ENCODE measurements at regions of chr1 and their contacts with region 1.

Region 1: DNA sequence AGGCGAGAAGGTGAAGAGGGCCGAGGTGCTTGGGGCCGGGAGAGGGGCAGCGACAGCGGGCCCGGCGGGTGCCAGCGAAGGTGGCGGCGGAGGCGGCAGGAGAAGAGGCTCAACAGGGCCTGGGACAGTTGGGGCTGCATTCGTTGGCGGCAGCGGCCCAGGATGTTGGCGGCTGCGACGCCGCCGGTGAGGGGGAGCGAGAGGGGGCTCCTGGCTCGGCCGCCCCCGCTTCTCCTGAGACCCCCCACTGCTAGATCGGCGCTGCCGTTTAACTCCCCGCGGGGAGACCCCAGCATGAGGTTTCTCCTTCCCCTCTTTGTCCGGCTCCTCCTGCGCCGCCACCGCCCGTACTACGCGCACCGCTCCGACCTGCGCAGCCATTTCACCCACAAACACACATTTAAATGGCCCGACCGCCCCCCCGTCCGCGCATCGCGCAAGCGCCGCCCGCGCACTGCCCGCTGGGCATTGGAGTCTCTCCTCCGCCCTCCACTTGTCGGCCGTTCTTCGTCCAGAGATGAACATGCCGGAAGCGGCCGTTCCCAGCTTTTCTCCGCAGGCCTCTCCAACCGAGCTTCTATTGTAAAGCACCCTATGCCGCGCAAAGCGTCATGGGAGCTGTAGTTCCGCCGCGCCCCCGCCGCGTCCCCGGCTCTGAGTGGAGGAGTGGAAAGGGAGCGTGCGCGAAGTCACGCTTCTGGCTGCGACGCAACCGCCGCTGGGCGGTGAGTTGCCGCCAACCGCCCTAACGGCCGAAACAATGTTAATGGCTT is at the start of gene RSBN1:
- DNase-seq: peak; percentile 92 to 99 (median 98)
- ATAC-seq: peak; percentile 95
- H3K4me3 ChIP-seq: peak within 1 kb of the TSS; percentile 88
- H3K4me3 Mint-ChIP-seq: peak within 1 kb of the TSS; percentile 91 to 99 (median 97)
- H3K27ac ChIP-seq: peak within 1 kb of the TSS; percentile 97
- H3K27ac Mint-ChIP-seq: peak within 1 kb of the TSS; percentile 96 to 99 (median 98)
- H3K4me1 ChIP-seq: peaks cover 17 to 25% of the 10 kb centered on the region in 2 donors
- H3K4me1 Mint-ChIP-seq: peaks cover 20 to 51% (median 38%) of the 10 kb centered on the region in 7 donors
- H3K27me3 ChIP-seq: no peaks in the 10 kb centered on the region
- H3K27me3 Mint-ChIP-seq: no peaks in the 10 kb centered on the region
- total RNA-seq, gene RSBN1: 29.9 to 58.1 (median 42.0) TPM

Region 2: DNA sequence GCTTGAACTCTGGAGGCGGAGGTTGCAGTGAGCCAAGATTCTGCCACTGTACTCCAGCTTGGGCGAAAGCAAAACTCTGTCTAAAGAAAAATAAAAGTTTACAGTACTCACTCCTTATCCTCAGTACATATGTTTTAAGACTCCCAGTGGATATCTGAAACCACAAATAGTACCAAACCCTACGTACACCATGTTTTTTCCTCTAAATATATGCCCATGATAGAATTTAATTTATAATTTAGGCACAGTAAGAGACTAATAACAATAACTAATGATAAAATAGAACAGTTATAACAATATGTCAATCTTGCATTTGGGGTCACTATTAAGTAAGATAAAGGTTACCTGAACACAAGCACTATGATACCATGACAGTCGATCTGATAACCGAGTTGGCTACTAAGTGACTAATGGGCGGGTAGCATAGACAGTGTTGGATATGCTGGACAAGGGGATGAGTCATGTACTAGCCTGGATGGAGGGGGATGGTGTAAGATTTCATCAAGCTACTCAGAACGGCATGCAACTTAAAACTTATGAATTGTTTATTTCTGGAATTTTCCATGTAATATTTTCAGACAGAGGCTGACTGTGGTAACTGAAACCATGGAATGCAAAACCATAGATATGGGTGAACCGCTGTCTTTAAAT is 1236.8 kb before region 1 on chr1:
- CTCF ChIA-PET with region 1: no interaction called
- POLR2A ChIA-PET with region 1: no interaction called
- intact Hi-C with region 1: no loop called
- DNase-seq: no peak
- ATAC-seq: no peak
- H3K4me3 ChIP-seq: no peak overlapping the region
- H3K4me3 Mint-ChIP-seq: no peak overlapping the region
- H3K27ac ChIP-seq: no peak overlapping the region
- H3K27ac Mint-ChIP-seq: no peak overlapping the region
- H3K4me1 ChIP-seq: no peaks in the 10 kb centered on the region
- H3K4me1 Mint-ChIP-seq: no peaks in the 10 kb centered on the region
- H3K27me3 ChIP-seq: no peaks in the 10 kb centered on the region
- H3K27me3 Mint-ChIP-seq: no peaks in the 10 kb centered on the region

Region 3: GRCh38 chr1:112619520-112620376 is 1192.3 kb before region 1 on chr1 and contains the start of gene CAPZA1:
- CTCF ChIA-PET with region 1: no interaction called
- POLR2A ChIA-PET with region 1: interaction called, 9 read pairs
- intact Hi-C with region 1: loop called (anchors 1 to 5 kb)
- DNase-seq: peak; percentile 83 to 93 (median 91)
- ATAC-seq: peak; percentile 89
- H3K4me3 ChIP-seq: peak within 1 kb of the TSS; percentile 93
- H3K4me3 Mint-ChIP-seq: peak within 1 kb of the TSS; percentile 98 to 100 (median 99)
- H3K27ac ChIP-seq: peak within 1 kb of the TSS; percentile 100
- H3K27ac Mint-ChIP-seq: peak within 1 kb of the TSS; percentile 99 to 100 (median 100)
- H3K4me1 ChIP-seq: peaks cover 19 to 21% of the 10 kb centered on the region in 2 donors
- H3K4me1 Mint-ChIP-seq: peaks cover 27 to 55% (median 46%) of the 10 kb centered on the region in 7 donors
- H3K27me3 ChIP-seq: no peaks in the 10 kb centered on the region
- H3K27me3 Mint-ChIP-seq: peaks cover 0 to 1% (median 0%) of the 10 kb centered on the region in 5 donors
- total RNA-seq, gene CAPZA1: 114 to 237 (median 143) TPM

Region 4: DNA sequence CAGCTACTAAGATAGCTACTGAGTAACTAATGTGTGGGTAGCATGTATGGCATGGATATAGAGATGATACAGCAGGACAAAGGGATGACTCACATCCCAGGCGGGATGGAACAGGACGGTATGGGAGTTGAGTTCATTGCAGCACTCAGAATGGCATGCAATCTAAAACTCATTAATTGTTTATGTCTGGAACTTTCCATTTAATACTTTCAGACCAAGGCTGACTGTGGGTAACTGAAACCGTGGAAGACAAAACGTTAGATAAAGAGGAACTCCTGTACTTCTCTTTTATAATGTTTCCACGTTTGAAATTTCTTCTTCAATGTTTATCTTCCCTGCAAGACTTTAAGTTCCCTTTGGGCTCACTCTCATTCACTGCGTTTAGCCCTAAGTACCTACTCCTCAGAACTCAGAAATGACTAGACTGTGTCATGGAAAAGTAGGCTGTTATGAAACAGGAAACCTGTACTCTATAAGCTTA is 269.8 kb before region 1 on chr1:
- CTCF ChIA-PET with region 1: no interaction called
- POLR2A ChIA-PET with region 1: no interaction called
- intact Hi-C with region 1: no loop called
- DNase-seq: no peak
- ATAC-seq: no peak
- H3K4me3 ChIP-seq: no peak overlapping the region
- H3K4me3 Mint-ChIP-seq: no peak overlapping the region
- H3K27ac ChIP-seq: no peak overlapping the region
- H3K27ac Mint-ChIP-seq: no peak overlapping the region
- H3K4me1 ChIP-seq: no peaks in the 10 kb centered on the region
- H3K4me1 Mint-ChIP-seq: peaks cover 0 to 9% (median 0%) of the 10 kb centered on the region in 7 donors
- H3K27me3 ChIP-seq: no peaks in the 10 kb centered on the region
- H3K27me3 Mint-ChIP-seq: no peaks in the 10 kb centered on the region

Region 5: DNA sequence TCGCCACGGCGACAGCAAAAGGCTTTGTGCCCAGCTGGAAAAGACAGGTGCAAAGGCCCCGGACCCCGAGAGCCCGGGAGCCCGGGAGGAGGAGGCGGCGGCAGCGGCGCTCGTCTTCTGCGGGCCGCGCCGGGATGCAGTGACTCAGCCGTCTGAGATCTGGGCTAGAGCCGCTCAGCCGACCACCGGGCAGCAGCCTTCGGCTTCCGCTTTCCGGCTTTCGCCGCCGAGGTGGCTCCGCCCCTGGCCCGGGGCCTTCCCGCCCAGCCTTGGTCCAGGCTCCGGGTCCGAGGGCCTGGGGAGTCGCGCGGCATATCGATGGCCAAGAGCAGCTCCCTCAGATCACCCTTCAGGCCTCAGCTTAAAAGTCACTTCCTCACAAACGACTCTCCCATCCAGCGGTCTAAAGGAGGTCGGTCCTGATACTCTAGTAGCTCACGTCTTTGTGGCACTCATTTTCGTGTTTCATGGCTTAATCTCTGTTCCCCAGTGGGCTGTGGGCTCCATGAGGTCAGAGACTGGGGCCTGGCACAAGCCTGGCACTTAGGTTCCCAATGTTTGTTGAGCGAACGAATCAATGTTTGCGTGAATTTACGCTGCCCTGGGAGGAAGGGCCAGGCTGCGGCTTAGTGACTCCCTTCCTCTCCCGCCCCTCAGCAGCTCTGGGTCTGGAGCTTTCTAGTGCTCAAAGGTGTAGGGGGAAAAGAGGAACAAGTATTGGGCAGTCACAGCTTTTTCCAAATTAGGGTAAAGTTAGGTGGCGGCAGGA is 52.6 kb before region 1 on chr1 and contains the start of gene PHTF1:
- CTCF ChIA-PET with region 1: interaction called, 3 read pairs
- POLR2A ChIA-PET with region 1: interaction called, 31 read pairs
- intact Hi-C with region 1: loop called (anchors 1 kb)
- DNase-seq: peak in 8 of 9 donors; percentile 14 to 74 (median 23)
- ATAC-seq: peak; percentile 88
- H3K4me3 ChIP-seq: peak within 1 kb of the TSS; percentile 81
- H3K4me3 Mint-ChIP-seq: peak within 1 kb of the TSS; percentile 91 to 97 (median 93)
- H3K27ac ChIP-seq: peak within 1 kb of the TSS; percentile 74
- H3K27ac Mint-ChIP-seq: peak within 1 kb of the TSS; percentile 87 to 96 (median 90)
- H3K4me1 ChIP-seq: peaks cover 0 to 16% of the 10 kb centered on the region in 2 donors
- H3K4me1 Mint-ChIP-seq: peaks cover 0 to 36% (median 24%) of the 10 kb centered on the region in 7 donors
- H3K27me3 ChIP-seq: no peaks in the 10 kb centered on the region
- H3K27me3 Mint-ChIP-seq: no peaks in the 10 kb centered on the region
- total RNA-seq, gene PHTF1: 2.5 to 21.0 (median 7.1) TPM

Region 6: GRCh38 chr1:113904674-113905434 is 92.8 kb after region 1 on chr1 and contains the starts of genes AP4B1 and DCLRE1B:
- CTCF ChIA-PET with region 1: interaction called, 7 read pairs
- POLR2A ChIA-PET with region 1: interaction called, 24 read pairs
- intact Hi-C with region 1: loop called (anchors 1 to 2 kb)
- DNase-seq: peak; percentile 88 to 98 (median 97)
- ATAC-seq: peak; percentile 96
- H3K4me3 ChIP-seq: peak within 1 kb of the TSS; percentile 82
- H3K4me3 Mint-ChIP-seq: peak within 1 kb of the TSS; percentile 92 to 100 (median 99)
- H3K27ac ChIP-seq: peak within 1 kb of the TSS; percentile 89
- H3K27ac Mint-ChIP-seq: peak within 1 kb of the TSS; percentile 96 to 100 (median 99)
- H3K4me1 ChIP-seq: peaks cover 15 to 21% of the 10 kb centered on the region in 2 donors
- H3K4me1 Mint-ChIP-seq: peaks cover 36 to 62% (median 54%) of the 10 kb centered on the region in 7 donors
- H3K27me3 ChIP-seq: no peaks in the 10 kb centered on the region
- H3K27me3 Mint-ChIP-seq: peaks cover 0 to 4% (median 0%) of the 10 kb centered on the region in 5 donors
- total RNA-seq, gene AP4B1: 50.8 to 75.4 (median 65.0) TPM
- total RNA-seq, gene DCLRE1B: 4.1 to 13.6 (median 6.9) TPM

Region 7: DNA sequence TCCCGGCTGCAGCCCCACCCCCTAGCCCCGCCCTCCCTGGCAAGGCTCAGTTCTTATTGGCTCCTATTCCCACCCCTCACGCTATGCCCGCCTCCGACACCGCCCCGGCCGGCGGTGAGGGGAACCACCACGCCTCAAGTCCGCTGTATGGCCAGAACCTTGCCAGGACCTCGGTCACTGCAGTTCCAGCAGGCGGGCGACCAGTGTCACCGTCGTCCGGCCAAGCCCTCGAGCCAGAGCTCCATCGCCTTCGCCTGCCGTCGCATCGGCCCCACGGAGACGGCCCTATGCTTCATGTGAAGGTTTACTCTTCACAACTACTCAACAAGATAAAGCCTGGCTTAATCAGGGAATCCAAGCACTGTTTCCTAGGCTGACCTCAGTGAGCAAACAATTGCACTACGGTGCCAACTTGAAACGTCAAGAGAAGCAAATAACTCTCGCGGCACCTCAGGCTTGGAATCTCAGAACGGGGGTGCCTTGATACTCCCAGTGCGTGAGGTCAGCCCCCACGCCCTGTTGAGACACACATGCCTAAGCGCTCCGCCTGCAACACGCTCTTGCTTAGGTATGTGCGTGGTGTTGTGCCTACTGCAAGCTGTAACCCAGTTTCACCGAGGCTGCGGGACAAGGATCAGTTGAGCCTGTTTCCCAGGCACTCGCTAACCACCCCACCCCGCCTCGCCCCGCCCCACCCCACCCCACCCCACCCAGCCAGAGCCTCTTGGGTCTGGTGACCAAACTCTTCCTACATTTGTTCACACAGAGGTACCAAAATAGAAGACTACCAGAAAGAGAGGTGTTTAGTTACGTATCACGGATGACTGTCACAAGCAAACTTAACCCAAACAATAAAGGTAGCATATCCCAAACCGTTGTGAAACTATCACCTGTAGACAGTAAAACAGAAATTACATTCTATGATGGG is 858.3 kb after region 1 on chr1:
- CTCF ChIA-PET with region 1: no interaction called
- POLR2A ChIA-PET with region 1: no interaction called
- intact Hi-C with region 1: loop called in 1 of 2 experiments (anchors 10 kb)
- DNase-seq: peak; percentile 60 to 84 (median 76)
- ATAC-seq: peak; percentile 99
- H3K4me3 ChIP-seq: peak overlapping the region; percentile 77
- H3K4me3 Mint-ChIP-seq: peak overlapping the region; percentile 84 to 98 (median 96)
- H3K27ac ChIP-seq: peak overlapping the region; percentile 45
- H3K27ac Mint-ChIP-seq: peak overlapping the region in 7 of 9 donors; percentile 58 to 91 (median 82)
- H3K4me1 ChIP-seq: no peaks in the 10 kb centered on the region
- H3K4me1 Mint-ChIP-seq: peaks cover 0 to 16% (median 9%) of the 10 kb centered on the region in 7 donors
- H3K27me3 ChIP-seq: no peaks in the 10 kb centered on the region
- H3K27me3 Mint-ChIP-seq: peaks cover 2 to 60% (median 14%) of the 10 kb centered on the region in 5 donors

Region 8: DNA sequence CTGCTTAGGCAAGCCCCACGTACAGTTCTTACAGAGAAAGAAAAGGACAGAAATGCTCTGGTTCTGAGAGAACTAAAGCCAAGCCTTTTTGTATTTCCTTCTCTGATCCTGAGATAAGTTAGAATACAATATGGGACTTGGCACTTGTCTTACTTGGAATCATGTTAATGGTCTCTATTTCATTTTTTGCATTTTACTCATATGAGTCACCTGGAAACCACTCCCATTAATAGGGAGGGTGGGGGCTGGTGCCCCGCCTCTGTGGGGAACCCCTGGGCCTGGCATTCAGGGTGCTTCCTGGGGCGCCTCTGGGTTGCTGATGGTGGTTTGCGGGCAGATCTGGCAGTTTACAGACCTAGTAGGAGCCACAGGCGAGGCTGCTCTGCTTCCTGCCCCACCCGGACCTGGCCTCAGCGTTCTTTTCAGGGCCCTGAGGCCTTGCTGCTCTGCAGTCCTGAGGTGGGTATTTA is 1250.5 kb after region 1 on chr1:
- CTCF ChIA-PET with region 1: no interaction called
- POLR2A ChIA-PET with region 1: no interaction called
- intact Hi-C with region 1: loop called in 1 of 2 experiments (anchors 1 kb)
- DNase-seq: peak; percentile 70 to 97 (median 97)
- ATAC-seq: peak; percentile 97
- H3K4me3 ChIP-seq: peak overlapping the region; percentile 36
- H3K4me3 Mint-ChIP-seq: peak overlapping the region; percentile 60 to 87 (median 78)
- H3K27ac ChIP-seq: peak overlapping the region; percentile 84
- H3K27ac Mint-ChIP-seq: peak overlapping the region; percentile 89 to 100 (median 99)
- H3K4me1 ChIP-seq: peaks cover 32% of the 10 kb centered on the region in 2 donors
- H3K4me1 Mint-ChIP-seq: peaks cover 36 to 59% (median 46%) of the 10 kb centered on the region in 7 donors
- H3K27me3 ChIP-seq: no peaks in the 10 kb centered on the region
- H3K27me3 Mint-ChIP-seq: peaks cover 0 to 6% (median 0%) of the 10 kb centered on the region in 5 donors